Sciatic nerve (tissue), 2 donors: ENCODE measurements at regions of chr11 and their contacts with region 1.

Region 1: GRCh38 chr11:74602637-74603556 is 10.5 kb downstream of the POLD3 start:
- DNase-seq: no peak
- ATAC-seq: peak; percentile 59

Region 2: DNA sequence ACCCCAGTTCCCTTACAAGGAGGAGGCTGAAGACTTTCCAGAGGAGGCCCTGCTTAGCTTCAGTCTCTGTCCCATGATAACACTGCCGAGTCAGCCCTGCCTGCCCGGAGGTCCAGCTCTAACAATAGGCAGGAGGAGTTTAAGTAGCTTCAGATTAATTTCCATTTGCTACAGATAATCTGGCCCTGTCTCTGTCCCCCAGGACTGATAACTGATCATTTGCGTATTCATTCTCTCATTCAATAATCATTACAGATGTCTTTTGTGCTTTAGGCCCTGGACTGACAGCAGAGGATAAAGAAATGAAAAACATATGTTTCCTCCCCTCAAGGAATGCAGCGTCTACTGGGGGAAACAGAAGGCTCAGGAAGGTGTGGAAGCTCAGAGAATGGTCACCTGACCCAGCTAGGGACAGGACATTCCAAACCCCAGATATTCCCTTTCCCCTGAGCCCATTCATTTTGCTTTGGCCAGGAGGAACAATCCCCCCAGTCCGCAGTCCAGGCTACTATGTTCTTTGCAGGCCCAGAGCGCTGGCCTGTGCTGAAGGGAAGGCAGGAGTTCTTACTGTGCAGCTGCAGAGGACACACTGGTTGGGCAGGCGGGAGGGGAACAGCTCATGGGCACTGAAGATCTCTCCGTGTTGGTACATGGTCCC is 107.5 kb after region 1 on chr11:
- intact Hi-C with region 1: no loop called
- DNase-seq: no peak
- ATAC-seq: peak; percentile 74

Region 3: GRCh38 chr11:74739546-74740270 is 136.8 kb after region 1 on chr11:
- intact Hi-C with region 1: loop called (anchors 10 kb)
- DNase-seq: no peak
- ATAC-seq: peak; percentile 91